ENCODE measurements at regions of chr6 and their contacts with region 1.

Region 1: GRCh38 chr6:49519660-49520059 is 19.9 kb downstream of the GLYATL3 start:
- DNase-seq: no peak
- ATAC-seq: no peak
- H3K4me3 ChIP-seq: no peak overlapping the region
- H3K27ac ChIP-seq: no peak overlapping the region
- H3K4me1 ChIP-seq: no peaks in the 10 kb centered on the region
- H3K27me3 ChIP-seq: no peaks in the 10 kb centered on the region
- CTCF ChIP-seq: no peak
- POLR2A ChIP-seq: no peak
- RAD21 ChIP-seq: no peak

Region 2: GRCh38 chr6:49606696-49607390 is 87.2 kb after region 1 on chr6:
- CTCF ChIA-PET with region 1: no interaction called
- POLR2A ChIA-PET with region 1: no interaction called
- dilution Hi-C with region 1: no loop called
- in situ Hi-C with region 1: loop called (anchors 10 kb)
- intact Hi-C with region 1: no loop called
- DNase-seq: peak; percentile 80
- ATAC-seq: peak; percentile 97
- H3K4me3 ChIP-seq: no peak overlapping the region
- H3K27ac ChIP-seq: no peak overlapping the region
- H3K4me1 ChIP-seq: no peaks in the 10 kb centered on the region
- H3K27me3 ChIP-seq: no peaks in the 10 kb centered on the region
- CTCF ChIP-seq: peak; percentile 83
- POLR2A ChIP-seq: no peak
- RAD21 ChIP-seq: peak; percentile 59

Region 3: GRCh38 chr6:50381099-50381415 is 861.4 kb after region 1 on chr6:
- CTCF ChIA-PET with region 1: no interaction called
- POLR2A ChIA-PET with region 1: no interaction called
- dilution Hi-C with region 1: no loop called
- in situ Hi-C with region 1: no loop called
- intact Hi-C with region 1: no loop called
- DNase-seq: no peak
- ATAC-seq: no peak
- H3K4me3 ChIP-seq: no peak overlapping the region
- H3K27ac ChIP-seq: no peak overlapping the region
- H3K4me1 ChIP-seq: no peaks in the 10 kb centered on the region
- H3K27me3 ChIP-seq: no peaks in the 10 kb centered on the region
- CTCF ChIP-seq: no peak
- POLR2A ChIP-seq: no peak
- RAD21 ChIP-seq: no peak